HEK293 (cell line): ENCODE measurements at regions of chr19 and their contacts with region 1.

Region 1: GRCh38 chr19:4576016-4576933 is 16.8 kb upstream of the SEMA6B start:
- H3K4me3 ChIP-seq: no peak overlapping the region
- H3K27ac ChIP-seq: no peak overlapping the region
- H3K4me1 ChIP-seq: peaks cover 4% of the 10 kb centered on the region
- CTCF ChIP-seq: peak; percentile 90

Region 2: GRCh38 chr19:4444765-4445741 is 131.2 kb before region 1 on chr19:
- CTCF ChIA-PET with region 1: no interaction called
- POLR2A ChIA-PET with region 1: no interaction called
- H3K4me3 ChIP-seq: no peak overlapping the region
- H3K27ac ChIP-seq: no peak overlapping the region
- H3K4me1 ChIP-seq: no peaks in the 10 kb centered on the region
- CTCF ChIP-seq: no peak

Region 3: GRCh38 chr19:4589579-4590410 is 13.5 kb after region 1 on chr19:
- CTCF ChIA-PET with region 1: interaction called, 20 read pairs
- POLR2A ChIA-PET with region 1: interaction called, 10 read pairs
- H3K4me3 ChIP-seq: no peak overlapping the region
- H3K27ac ChIP-seq: no peak overlapping the region
- H3K4me1 ChIP-seq: no peaks in the 10 kb centered on the region
- CTCF ChIP-seq: peak; percentile 42; the same call in 1 of the 2 replicates

Region 4: GRCh38 chr19:4624733-4625362 is 48.6 kb after region 1 on chr19:
- CTCF ChIA-PET with region 1: interaction called, 16 read pairs
- POLR2A ChIA-PET with region 1: no interaction called
- H3K4me3 ChIP-seq: no peak overlapping the region
- H3K27ac ChIP-seq: no peak overlapping the region
- H3K4me1 ChIP-seq: no peaks in the 10 kb centered on the region
- CTCF ChIP-seq: peak; percentile 70